ENCODE measurements at regions of chr1 and their contacts with region 1.

Region 1: DNA sequence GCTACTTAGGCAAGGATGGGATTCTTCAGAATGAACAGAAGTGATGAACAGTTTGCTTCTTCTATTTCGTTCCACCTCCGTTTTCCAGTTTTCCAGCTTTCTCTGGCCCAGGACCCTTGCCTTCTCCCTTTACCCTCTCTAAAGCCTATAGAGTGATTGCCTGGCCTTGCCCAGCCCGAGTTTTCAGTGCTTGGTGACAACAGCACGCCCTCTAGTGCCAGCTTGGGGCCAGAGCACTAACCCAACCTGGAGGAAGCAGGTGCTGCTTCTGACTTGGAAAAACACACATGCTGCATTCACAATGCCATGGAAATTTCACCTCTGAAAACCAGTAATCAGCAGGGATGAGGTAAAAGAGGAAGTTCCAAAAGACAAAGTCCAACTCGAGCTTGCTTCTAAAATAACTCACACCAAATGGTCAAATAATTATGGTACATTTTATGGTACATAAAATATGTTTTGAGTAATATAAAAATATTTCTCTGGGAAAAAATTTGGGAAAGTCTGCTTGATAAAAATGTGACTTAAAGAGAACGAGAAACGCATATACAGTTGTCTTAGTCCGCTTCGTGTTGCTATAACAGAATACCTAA is 26.1 kb downstream of the UBE2T start:
- DNase-seq: peak; percentile 92
- H3K4me3 Mint-ChIP-seq: no peak overlapping the region
- H3K27ac Mint-ChIP-seq: no peak overlapping the region
- H3K4me1 Mint-ChIP-seq: no peaks in the 10 kb centered on the region
- H3K27me3 Mint-ChIP-seq: no peaks in the 10 kb centered on the region
- CTCF ChIP-seq: peak; percentile 99

Region 2: DNA sequence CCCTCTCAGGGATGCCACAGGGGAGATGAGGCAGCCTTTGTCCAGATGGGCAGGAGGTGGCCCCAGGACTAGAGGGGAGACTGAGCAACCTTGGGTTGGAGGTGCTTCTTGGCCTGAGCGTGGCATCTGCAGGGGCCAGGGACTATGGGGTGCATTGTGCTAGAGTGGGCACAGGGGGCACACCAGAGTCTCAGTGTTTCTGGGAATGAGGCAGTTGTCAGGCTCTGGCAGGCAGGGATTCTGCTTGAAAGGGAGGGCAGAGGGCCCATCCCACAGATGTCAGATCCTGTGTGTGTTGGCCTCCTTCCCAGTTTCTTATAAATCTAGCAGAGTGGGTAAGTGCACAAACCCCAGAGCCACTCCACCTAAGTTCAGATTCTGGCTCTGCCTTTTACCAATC is 108.4 kb before region 1 on chr1:
- CTCF ChIA-PET with region 1: interaction called, 954 read pairs
- POLR2A ChIA-PET with region 1: no interaction called
- intact Hi-C with region 1: loop called (anchors 1 kb)
- DNase-seq: peak; percentile 69
- H3K4me3 Mint-ChIP-seq: no peak overlapping the region
- H3K27ac Mint-ChIP-seq: no peak overlapping the region
- H3K4me1 Mint-ChIP-seq: peaks cover 5% of the 10 kb centered on the region
- H3K27me3 Mint-ChIP-seq: peaks cover 8% of the 10 kb centered on the region
- CTCF ChIP-seq: peak; percentile 13

Region 3: GRCh38 chr1:202235856-202236837 is 79.5 kb before region 1 on chr1:
- CTCF ChIA-PET with region 1: interaction called, 18 read pairs
- POLR2A ChIA-PET with region 1: no interaction called
- intact Hi-C with region 1: loop called (anchors 1 kb)
- DNase-seq: peak; percentile 97
- H3K4me3 Mint-ChIP-seq: peak overlapping the region; percentile 61
- H3K27ac Mint-ChIP-seq: peak overlapping the region; percentile 49
- H3K4me1 Mint-ChIP-seq: peaks cover 35% of the 10 kb centered on the region
- H3K27me3 Mint-ChIP-seq: no peaks in the 10 kb centered on the region
- CTCF ChIP-seq: peak; percentile 100

Region 4: GRCh38 chr1:202274611-202275010 is 41.1 kb before region 1 on chr1:
- CTCF ChIA-PET with region 1: interaction called, 95 read pairs
- POLR2A ChIA-PET with region 1: no interaction called
- intact Hi-C with region 1: loop called (anchors 1 kb)
- DNase-seq: peak; percentile 92
- H3K4me3 Mint-ChIP-seq: no peak overlapping the region
- H3K27ac Mint-ChIP-seq: no peak overlapping the region
- H3K4me1 Mint-ChIP-seq: peaks cover 3% of the 10 kb centered on the region
- H3K27me3 Mint-ChIP-seq: no peaks in the 10 kb centered on the region
- CTCF ChIP-seq: peak; percentile 88

Region 5: GRCh38 chr1:202291961-202292712 is 23.5 kb before region 1 on chr1:
- CTCF ChIA-PET with region 1: interaction called, 19 read pairs
- POLR2A ChIA-PET with region 1: no interaction called
- intact Hi-C with region 1: no loop called
- DNase-seq: peak; percentile 100
- H3K4me3 Mint-ChIP-seq: no peak overlapping the region
- H3K27ac Mint-ChIP-seq: no peak overlapping the region
- H3K4me1 Mint-ChIP-seq: peaks cover 49% of the 10 kb centered on the region
- H3K27me3 Mint-ChIP-seq: peaks cover 15% of the 10 kb centered on the region
- CTCF ChIP-seq: no peak

Region 6: DNA sequence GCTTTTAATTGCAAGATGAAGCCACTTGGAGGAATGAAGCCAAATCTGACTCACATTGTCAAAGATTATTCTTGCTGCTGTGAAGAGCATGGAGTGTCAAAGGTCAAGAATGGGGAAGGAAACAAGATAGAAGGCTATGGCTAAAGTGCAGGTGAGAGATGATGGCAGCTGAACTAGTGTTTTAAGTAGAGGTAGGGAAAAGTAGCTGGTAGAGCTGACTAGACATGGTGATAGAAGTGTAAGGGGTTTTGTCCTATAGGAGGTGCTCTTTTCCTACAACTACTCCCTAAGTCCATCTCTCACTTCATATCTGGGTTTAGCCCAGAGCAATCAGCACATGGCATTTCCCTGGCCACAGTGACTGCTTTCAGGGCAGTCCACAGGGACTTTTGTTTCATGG is 14.2 kb after region 1 on chr1:
- CTCF ChIA-PET with region 1: interaction called, 80 read pairs
- POLR2A ChIA-PET with region 1: interaction called, 3 read pairs
- intact Hi-C with region 1: no loop called
- DNase-seq: no peak
- H3K4me3 Mint-ChIP-seq: no peak overlapping the region
- H3K27ac Mint-ChIP-seq: no peak overlapping the region
- H3K4me1 Mint-ChIP-seq: no peaks in the 10 kb centered on the region
- H3K27me3 Mint-ChIP-seq: no peaks in the 10 kb centered on the region
- CTCF ChIP-seq: peak; percentile 17